Calu3 (cell line): ENCODE measurements at regions of chr4 and their contacts with region 1.

Region 1: DNA sequence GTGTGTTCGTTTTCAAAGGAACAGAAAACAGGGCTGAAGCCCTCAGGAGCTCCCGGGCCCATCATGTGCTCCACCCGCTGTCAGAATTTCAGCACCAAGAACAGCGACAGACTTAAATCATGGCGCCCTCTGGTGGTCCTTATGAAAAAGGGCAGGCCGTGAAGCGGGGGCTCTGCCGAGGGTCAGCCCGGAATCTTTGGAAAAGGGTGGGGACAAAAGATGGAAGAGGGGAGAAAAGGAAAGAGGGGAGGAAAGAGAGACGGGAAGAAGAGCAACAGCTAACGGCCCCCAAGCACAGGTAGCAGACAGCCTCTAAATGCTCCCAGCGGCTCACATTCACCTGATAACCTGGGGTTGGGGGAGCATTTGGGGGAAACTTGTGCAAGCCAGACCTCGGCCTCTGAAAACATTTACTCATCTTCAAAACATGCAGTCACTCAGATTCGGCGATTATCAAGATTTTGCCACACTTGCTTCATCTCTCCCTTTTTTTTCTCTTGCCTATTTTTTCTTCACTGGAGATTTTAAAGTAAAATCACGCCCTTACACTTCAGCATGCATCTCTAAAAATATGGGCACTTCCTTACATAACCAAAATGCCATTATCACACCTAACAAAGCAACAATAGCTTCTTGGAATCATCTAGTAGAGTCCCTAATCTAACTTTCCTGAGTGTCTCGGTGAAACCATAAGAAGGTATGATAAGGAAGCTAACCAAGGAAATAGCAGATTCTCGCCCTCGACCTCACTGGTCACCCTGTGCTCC is 28.1 kb upstream of the MAN2B2 start:
- DNase-seq: peak; percentile 31
- H3K4me3 Mint-ChIP-seq: no peak overlapping the region
- H3K27ac Mint-ChIP-seq: no peak overlapping the region
- H3K4me1 Mint-ChIP-seq: no peaks in the 10 kb centered on the region
- H3K27me3 Mint-ChIP-seq: peaks cover 73% of the 10 kb centered on the region
- CTCF ChIP-seq: peak; percentile 84

Region 2: DNA sequence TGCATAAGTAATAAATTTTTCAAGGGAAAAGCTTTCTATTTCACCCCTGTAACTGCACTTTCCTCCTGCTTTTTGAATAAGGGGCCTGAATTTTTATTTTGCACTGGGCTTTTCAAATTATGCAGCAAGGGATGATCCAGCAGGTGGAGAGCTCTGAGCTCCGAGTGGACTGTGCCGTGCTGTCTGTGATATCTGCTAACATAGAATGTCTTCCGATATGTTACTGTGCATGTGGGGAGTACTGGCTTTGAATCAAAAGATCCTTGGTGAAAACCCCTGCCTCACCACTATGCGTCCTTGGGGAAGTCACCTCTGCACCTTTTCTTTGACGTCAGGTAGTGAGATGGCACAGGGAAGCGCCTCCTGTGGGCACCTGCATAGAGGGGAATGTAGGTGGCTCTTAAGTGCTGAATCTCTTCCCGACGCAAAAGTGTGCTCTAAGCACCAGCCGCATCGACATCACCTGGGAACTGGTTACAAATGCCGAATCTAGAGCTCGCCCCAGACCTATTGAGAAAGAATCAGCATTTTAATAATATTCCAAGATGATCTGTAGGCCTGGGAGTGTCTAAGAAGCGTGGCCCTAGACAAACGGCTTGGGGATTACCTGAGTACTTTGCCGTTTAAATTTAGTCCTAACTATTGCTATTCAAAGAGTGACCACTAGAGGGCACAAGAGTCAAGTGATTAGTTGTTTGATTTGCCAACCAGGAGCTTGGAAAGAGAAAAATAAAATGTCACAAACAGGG is 296.5 kb before region 1 on chr4:
- CTCF ChIA-PET with region 1: interaction called, 3 read pairs
- intact Hi-C with region 1: loop called (anchors 10 kb)
- DNase-seq: peak; percentile 40
- H3K4me3 Mint-ChIP-seq: no peak overlapping the region
- H3K27ac Mint-ChIP-seq: no peak overlapping the region
- H3K4me1 Mint-ChIP-seq: no peaks in the 10 kb centered on the region
- H3K27me3 Mint-ChIP-seq: peaks cover 35% of the 10 kb centered on the region
- CTCF ChIP-seq: peak; percentile 58

Region 3: DNA sequence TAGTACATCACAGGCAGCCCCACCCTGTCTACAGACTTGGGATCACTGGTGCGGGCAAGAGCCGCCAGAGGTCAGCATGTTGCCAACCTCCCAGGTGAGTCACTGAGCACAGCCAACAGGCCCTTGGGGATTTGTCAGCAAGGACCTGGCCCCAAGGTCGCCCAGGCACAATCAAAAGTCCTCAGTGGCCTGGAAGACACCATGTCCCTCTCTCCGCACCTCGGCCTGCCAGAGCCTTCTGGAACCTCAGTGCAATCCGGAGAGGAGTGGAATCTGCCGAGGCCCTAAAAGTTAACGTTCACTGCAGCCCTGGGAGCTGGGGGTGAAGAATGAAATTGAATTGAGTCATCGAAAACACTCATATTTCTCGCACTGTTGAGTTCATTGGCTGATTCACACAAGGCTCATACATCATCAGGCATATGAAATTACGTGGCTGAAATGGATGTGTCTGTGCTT is 202.9 kb before region 1 on chr4:
- CTCF ChIA-PET with region 1: interaction called, 6 read pairs
- intact Hi-C with region 1: loop called (anchors 5 kb)
- DNase-seq: peak; percentile 68
- H3K4me3 Mint-ChIP-seq: no peak overlapping the region
- H3K27ac Mint-ChIP-seq: no peak overlapping the region
- H3K4me1 Mint-ChIP-seq: no peaks in the 10 kb centered on the region
- H3K27me3 Mint-ChIP-seq: peaks cover 21% of the 10 kb centered on the region
- CTCF ChIP-seq: no peak

Region 4: GRCh38 chr4:6668381-6668780 is 121.5 kb after region 1 on chr4:
- CTCF ChIA-PET with region 1: interaction called, 3 read pairs
- intact Hi-C with region 1: loop called (anchors 10 kb)
- DNase-seq: no peak
- H3K4me3 Mint-ChIP-seq: no peak overlapping the region
- H3K27ac Mint-ChIP-seq: no peak overlapping the region
- H3K4me1 Mint-ChIP-seq: no peaks in the 10 kb centered on the region
- H3K27me3 Mint-ChIP-seq: peaks cover 4% of the 10 kb centered on the region
- CTCF ChIP-seq: no peak

Region 5: DNA sequence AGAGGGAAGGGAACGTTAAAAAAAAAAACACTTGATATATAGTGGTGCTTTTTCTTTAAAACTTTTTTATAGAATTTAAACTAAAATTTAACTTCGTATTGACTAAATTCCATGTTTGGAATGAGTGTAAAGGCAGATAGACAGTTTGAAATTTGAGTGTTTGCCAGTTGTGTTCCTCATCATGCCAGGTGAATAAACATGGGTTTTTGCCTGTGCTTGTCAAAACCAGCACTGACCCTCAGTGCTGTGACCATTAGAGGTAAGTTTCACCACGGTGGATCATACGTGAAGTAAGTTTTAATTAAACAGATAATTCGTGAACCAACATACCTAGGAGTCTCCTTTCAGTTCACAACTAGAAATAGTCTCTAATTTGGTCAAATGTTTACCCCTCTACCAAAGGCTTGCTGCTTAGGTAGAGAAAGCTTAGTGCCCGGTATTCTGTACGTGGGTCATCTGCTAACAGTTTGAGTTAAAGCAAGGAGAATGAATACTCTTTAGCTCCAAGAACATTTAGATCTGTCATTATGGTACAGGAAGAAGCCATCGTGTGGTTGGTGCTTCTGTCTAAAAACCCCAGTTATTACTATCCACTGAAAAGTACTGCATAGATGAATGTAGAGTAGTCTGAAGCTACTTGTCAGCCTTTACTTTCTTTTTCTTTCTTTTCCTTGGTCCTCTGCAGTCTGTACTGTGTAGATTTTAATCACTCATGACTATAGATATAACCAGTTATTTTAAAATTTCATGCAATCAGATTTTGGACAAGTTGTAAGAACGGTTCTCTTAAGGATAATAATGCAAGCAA is 268.4 kb after region 1 on chr4:
- CTCF ChIA-PET with region 1: no interaction called
- intact Hi-C with region 1: no loop called
- DNase-seq: no peak
- H3K4me3 Mint-ChIP-seq: no peak overlapping the region
- H3K27ac Mint-ChIP-seq: no peak overlapping the region
- H3K4me1 Mint-ChIP-seq: no peaks in the 10 kb centered on the region
- H3K27me3 Mint-ChIP-seq: no peaks in the 10 kb centered on the region
- CTCF ChIP-seq: no peak

Region 6: GRCh38 chr4:6991771-6992557 is 445.1 kb after region 1 on chr4:
- CTCF ChIA-PET with region 1: no interaction called
- intact Hi-C with region 1: no loop called
- DNase-seq: no peak
- H3K4me3 Mint-ChIP-seq: no peak overlapping the region
- H3K27ac Mint-ChIP-seq: no peak overlapping the region
- H3K4me1 Mint-ChIP-seq: peaks cover 26% of the 10 kb centered on the region
- H3K27me3 Mint-ChIP-seq: no peaks in the 10 kb centered on the region
- CTCF ChIP-seq: no peak